ENCODE measurements at regions of chr2 and their contacts with region 1.

Region 1: GRCh38 chr2:118088051-118089024 is at the start of gene INSIG2:
- DNase-seq: peak; percentile 85 to 99 (median 94)

Region 2: DNA sequence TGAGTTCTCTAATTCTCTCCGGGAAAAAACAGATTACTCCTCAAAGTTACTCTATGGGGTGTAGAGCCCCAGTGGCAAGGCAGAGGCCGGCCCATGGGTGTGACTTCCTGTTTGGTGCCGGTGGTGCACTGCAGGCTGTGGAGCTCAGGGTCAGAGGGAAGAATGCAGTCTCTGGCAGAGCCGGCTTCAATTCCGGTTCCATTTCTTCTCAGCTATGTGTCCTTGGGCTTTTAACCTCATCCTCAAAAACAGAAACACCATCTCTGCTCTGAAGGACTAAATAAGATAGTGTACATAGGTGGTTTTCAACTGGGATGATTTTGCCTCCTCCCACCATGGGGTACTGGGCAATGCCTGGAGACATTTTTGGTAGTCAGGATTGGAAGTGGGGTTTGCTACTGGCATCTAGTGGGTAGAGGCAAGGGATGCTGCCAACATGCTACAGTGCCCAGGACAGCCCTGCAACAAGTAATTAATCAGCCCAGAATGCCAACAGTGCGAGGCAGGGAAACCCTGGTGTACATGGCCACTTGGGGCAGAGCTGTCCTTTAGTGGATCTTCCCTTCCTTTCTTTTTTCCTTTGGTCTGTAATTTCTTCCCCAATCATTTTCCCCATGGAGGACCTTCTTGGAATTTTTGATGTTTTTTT is 81.1 kb after region 1 on chr2:
- intact Hi-C with region 1: no loop called
- DNase-seq: no peak

Region 3: DNA sequence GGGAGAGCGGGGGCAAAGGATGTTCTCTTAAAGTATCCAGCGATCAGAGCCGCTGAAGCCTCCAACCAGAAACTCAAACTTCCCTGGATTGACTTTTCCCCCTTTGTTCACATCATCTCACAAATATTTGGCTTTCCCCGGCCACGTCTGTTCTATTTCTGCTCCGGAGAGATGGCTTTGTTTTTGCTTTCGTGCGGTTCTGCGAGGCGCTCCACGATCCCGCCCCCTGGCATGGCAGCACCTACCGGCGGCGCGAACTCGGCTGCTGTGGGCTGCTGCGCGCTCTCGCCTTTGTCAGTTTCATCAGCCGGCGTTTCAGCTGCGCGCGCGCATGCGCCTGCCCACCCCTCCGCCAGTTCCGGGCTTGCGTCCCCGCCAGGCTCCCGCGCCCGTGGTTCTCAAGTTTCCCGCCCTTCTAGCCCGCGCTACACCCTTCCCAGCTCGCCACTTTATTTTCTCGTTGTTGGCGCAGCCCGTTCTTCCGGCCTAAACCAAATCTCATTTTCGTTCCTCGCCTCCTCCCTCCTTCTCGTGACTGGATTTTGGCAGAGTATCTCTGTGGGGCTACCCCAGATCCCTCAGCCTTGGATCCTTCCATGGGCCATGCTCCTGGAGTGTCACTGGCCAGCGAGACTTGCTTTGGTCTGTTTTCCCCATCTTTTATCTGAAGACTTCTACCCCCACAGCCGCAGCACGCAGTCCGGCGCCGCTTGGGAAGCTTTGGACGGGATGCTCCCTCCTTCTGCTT is 97.9 kb after region 1 on chr2:
- intact Hi-C with region 1: loop called (anchors 1 kb)
- DNase-seq: peak; percentile 78 to 98 (median 84)